H1 (cell line): ENCODE measurements at regions of chr6 and their contacts with region 1.

Region 1: DNA sequence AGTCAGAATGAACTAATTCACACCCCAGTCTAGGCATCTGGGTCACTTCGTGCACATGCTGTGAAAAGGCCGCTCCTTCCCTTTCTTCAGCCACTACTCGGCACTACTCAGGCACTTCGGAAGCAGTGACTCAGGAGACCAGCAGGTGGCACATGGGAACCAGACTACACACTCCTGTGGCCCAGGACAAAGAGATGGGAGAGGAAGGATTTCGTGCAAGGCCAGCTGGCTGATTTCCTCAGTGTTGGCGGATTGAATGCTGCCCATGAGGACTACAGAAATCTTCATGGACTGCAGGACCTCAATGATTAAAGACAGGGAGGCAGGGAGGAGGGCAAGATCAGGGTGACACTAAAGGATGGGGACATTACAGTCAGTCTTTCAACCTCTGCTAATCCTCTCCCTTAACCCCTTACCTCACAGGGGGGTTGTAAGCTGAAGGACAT is 117.8 kb upstream of the SPACA1 start:
- DNase-seq: peak; percentile 77 to 82
- H3K4me3 ChIP-seq: no peak overlapping the region
- H3K27ac ChIP-seq: no peak overlapping the region
- H3K4me1 ChIP-seq: peaks cover 0 to 9% (median 4%) of the 10 kb centered on the region in 4 experiments; a peak in 4 of 7 replicates
- H3K27me3 ChIP-seq: no peaks in the 10 kb centered on the region
- CTCF ChIP-seq: peak; percentile 90 to 99 (median 91)
- EP300 ChIP-seq: no peak
- POLR2A ChIP-seq: no peak
- RAD21 ChIP-seq: peak; percentile 98 to 99

Region 2: GRCh38 chr6:87837444-87837843 is 92.4 kb before region 1 on chr6:
- CTCF ChIA-PET with region 1: no interaction called
- POLR2A ChIA-PET with region 1: no interaction called
- DNase-seq: no peak
- H3K4me3 ChIP-seq: no peak overlapping the region
- H3K27ac ChIP-seq: no peak overlapping the region
- H3K4me1 ChIP-seq: no peaks in the 10 kb centered on the region
- H3K27me3 ChIP-seq: no peaks in the 10 kb centered on the region
- CTCF ChIP-seq: no peak
- EP300 ChIP-seq: no peak
- POLR2A ChIP-seq: no peak
- RAD21 ChIP-seq: no peak

Region 3: DNA sequence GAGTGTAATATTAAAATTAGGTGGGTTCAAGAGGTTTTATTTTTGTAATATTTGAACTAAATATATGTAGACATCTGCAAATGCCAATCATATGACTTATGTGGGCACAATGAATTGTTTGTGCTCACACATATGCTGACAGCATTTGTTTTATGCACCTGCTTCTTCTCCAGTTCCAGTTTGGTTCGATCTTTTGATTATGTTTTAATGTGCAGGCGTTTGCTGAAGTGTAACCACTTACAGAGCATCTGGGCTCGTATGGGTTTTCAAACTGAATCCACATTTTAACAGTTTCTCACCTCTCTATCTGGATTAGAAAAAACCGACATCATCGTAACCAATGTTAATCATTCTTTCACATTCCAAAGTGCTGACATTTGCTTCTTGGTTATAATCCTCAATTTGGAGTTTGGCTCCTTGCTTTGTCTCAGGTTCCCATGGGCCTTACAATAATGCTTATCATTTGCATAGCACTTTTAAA is 11.4 kb before region 1 on chr6:
- CTCF ChIA-PET with region 1: interaction called, 23 read pairs
- POLR2A ChIA-PET with region 1: no interaction called
- DNase-seq: no peak
- H3K4me3 ChIP-seq: no peak overlapping the region
- H3K27ac ChIP-seq: no peak overlapping the region
- H3K4me1 ChIP-seq: no peaks in the 10 kb centered on the region; a peak in 1 of 7 replicates
- H3K27me3 ChIP-seq: no peaks in the 10 kb centered on the region
- CTCF ChIP-seq: no peak
- EP300 ChIP-seq: no peak
- POLR2A ChIP-seq: no peak
- RAD21 ChIP-seq: no peak

Region 4: GRCh38 chr6:87941556-87942358 is 11.9 kb after region 1 on chr6:
- CTCF ChIA-PET with region 1: interaction called, 19 read pairs
- POLR2A ChIA-PET with region 1: no interaction called
- DNase-seq: no peak
- H3K4me3 ChIP-seq: no peak overlapping the region
- H3K27ac ChIP-seq: no peak overlapping the region
- H3K4me1 ChIP-seq: peaks cover 0 to 5% (median under 1%) of the 10 kb centered on the region in 4 experiments; a peak in 1 of 7 replicates
- H3K27me3 ChIP-seq: no peaks in the 10 kb centered on the region
- CTCF ChIP-seq: no peak
- EP300 ChIP-seq: no peak
- POLR2A ChIP-seq: no peak
- RAD21 ChIP-seq: no peak

Region 5: DNA sequence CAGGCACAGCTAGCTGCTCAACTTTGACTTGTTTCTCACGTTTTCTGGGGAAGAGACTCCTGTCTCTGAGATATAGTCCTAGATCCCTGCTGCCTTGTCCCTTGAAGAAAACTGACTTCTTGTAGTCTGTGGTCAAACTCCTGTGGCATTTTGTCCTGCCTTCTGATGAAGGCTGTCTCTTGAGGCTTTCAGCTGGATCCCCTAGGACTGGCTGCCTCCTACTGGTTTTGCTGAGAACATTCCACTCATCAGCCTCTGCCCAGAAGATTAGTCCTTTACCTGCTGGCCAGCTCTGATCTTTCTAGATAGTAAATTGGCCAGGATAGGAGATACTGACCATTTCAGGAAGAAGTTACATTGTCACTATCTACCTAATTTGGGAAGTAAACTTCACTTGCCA is 308.2 kb after region 1 on chr6:
- CTCF ChIA-PET with region 1: interaction called, 43 read pairs
- POLR2A ChIA-PET with region 1: no interaction called
- DNase-seq: peak; percentile 27 to 55
- H3K4me3 ChIP-seq: no peak overlapping the region
- H3K27ac ChIP-seq: no peak overlapping the region
- H3K4me1 ChIP-seq: no peaks in the 10 kb centered on the region
- H3K27me3 ChIP-seq: no peaks in the 10 kb centered on the region
- CTCF ChIP-seq: peak; percentile 49 to 86 (median 85)
- EP300 ChIP-seq: no peak
- POLR2A ChIP-seq: no peak
- RAD21 ChIP-seq: peak; percentile 96 to 97